Testis (tissue), 5 donors: ENCODE measurements at regions of chr9 and their contacts with region 1.

Region 1: DNA sequence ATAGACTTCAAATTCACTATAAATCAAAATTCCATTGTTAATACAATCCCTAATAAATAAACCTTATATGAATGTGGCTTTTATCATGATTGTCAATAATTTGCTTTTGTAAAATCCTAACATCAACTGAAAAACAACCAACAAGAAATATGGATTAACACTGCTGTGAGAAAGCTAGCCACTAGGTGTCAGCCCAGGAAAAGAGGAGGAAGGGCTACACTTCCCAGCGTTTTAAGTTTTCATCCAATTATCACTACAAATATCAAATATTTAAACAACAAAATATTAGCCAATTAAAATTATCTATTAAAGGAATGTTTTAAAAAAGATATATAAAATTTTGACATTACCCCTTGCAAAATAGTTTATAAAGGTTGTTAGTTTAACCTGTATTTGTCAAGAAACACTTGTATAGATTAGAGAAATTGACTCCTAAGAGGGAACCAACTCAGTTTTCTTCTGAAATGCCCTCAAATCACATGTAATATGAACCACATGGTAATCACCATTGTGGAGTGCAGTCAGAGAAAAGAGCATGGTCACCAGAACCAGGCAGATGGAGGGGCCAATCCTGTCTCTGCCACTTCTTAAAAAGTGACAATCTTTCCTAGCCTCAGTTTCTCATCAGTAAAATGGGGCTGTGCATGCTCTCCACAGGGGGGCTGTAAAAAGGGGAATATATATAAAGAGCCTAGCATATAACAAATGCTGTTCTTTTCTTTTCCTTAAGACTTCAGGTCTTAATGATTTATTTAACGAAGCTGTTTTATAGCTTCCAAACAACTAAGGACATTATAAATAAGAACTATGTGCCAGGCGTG is 188.2 kb downstream of the CRB2 start:
- DNase-seq: peak; percentile 33
- H3K4me3 ChIP-seq: no peak overlapping the region
- H3K27ac ChIP-seq: no peak overlapping the region
- H3K4me1 ChIP-seq: peaks cover 8% of the 10 kb centered on the region
- H3K27me3 ChIP-seq: no peaks in the 10 kb centered on the region
- CTCF ChIP-seq: peak; percentile 79 to 84 (median 84)
- POLR2A ChIP-seq: no peak

Region 2: GRCh38 chr9:123225374-123225813 is 318.8 kb before region 1 on chr9:
- intact Hi-C with region 1: no loop called
- DNase-seq: peak; percentile 58
- H3K4me3 ChIP-seq: no peak overlapping the region
- H3K27ac ChIP-seq: no peak overlapping the region
- H3K4me1 ChIP-seq: no peaks in the 10 kb centered on the region
- H3K27me3 ChIP-seq: no peaks in the 10 kb centered on the region
- CTCF ChIP-seq: peak in 1 of 3 experiments; percentile 28
- POLR2A ChIP-seq: no peak

Region 3: GRCh38 chr9:123656565-123656964 is 112.3 kb after region 1 on chr9:
- intact Hi-C with region 1: no loop called
- DNase-seq: no peak
- H3K4me3 ChIP-seq: no peak overlapping the region
- H3K27ac ChIP-seq: no peak overlapping the region
- H3K4me1 ChIP-seq: peaks cover 28% of the 10 kb centered on the region
- H3K27me3 ChIP-seq: no peaks in the 10 kb centered on the region
- CTCF ChIP-seq: no peak
- POLR2A ChIP-seq: no peak

Region 4: DNA sequence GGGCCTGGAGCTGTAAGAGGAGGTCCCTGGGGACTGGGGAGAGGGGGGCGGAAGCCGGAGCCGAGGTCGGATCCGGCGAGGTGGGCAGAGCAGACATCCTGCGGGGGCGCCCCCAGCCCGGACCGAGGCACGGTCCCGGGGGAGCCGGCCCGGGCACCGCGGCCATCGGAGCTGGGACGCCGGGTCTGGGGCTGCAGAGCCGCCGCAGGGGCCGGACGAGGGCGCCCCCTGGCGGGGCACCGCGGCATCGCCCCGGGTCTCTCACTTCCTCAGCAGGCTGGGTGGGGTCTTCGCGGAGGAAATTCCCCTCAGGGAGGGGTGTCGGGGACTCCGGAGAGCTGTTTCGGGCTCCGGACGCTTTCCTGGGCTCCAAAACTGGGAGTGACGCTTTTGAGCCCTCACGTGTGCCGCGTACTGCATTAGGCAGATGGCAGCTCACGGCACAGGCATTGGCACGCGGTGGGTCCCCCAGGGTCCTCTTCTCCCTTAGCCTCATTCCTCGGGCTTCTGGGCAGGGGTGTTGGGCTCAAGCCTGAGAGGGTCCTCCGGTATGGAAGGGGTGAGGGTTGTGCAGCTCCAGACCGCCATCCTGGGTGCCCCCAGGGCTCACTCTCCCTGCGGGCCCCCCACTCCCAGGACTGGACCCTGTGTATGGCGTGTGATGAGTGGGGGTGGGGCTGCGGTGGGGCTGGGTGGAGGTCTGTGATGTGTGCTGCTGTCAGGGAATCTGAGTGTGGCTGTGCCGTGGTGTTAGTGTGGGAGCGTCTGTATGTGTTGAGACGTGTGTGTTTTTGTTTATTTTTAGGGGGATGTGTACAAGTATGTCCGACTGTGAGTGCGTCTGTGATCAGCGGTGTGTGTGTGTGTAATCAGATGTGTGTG is 497.0 kb after region 1 on chr9:
- intact Hi-C with region 1: loop called (anchors 5 kb)
- DNase-seq: peak; percentile 77
- H3K4me3 ChIP-seq: peak overlapping the region; percentile 53 to 61
- H3K27ac ChIP-seq: no peak overlapping the region
- H3K4me1 ChIP-seq: peaks cover 6% of the 10 kb centered on the region
- H3K27me3 ChIP-seq: no peaks in the 10 kb centered on the region
- CTCF ChIP-seq: peak; percentile 91 to 97 (median 96)
- POLR2A ChIP-seq: no peak